A673 (cell line): ENCODE measurements at regions of chr7 and their contacts with region 1.

Region 1: DNA sequence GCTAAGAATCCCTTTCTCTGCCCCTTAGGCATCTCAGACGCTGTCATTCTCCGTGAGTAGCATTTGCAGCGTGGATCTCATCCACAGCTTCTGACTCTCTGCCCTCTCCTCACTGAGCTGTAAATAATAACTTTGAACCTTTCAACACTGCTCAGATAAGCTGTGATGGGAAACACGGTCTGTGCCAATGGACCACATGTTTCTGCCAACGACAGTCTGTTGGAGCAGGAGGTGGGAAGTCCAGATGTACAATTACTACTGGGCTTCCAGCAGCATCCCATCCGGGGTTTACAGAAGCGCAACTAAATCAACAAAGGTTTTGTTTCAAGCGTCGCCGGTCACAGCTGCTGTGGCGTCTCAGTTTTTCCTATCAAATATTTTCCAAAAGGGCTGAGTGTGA is 1110.6 kb downstream of the TYW1 start:
- DNase-seq: no peak
- H3K4me3 ChIP-seq: no peak overlapping the region
- H3K27ac ChIP-seq: no peak overlapping the region
- H3K4me1 ChIP-seq: no peaks in the 10 kb centered on the region
- H3K27me3 ChIP-seq: no peaks in the 10 kb centered on the region
- CTCF ChIP-seq: no peak

Region 2: DNA sequence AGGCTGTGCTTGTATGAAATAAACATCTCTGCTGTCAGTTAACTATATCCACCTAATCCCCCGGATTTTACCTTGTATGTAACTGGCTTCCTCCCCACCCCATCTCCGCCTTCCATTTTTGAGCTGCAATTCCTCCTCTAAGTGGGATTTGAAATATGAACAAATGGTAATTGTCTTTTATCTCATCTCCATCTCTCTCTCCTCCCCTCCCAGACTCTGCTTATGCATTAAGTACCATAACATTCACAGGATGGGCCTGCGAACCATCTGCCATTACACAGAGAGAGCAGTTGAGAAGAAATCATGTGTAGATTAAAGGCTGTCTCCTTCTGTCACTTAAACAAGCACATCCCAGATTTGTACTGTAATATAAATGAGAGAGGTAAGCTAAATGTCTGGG is 59.3 kb after region 1 on chr7:
- CTCF ChIA-PET with region 1: no interaction called
- POLR2A ChIA-PET with region 1: no interaction called
- intact Hi-C with region 1: loop called (anchors 10 kb)
- DNase-seq: no peak
- H3K4me3 ChIP-seq: no peak overlapping the region
- H3K27ac ChIP-seq: no peak overlapping the region
- H3K4me1 ChIP-seq: peaks cover 5% of the 10 kb centered on the region
- H3K27me3 ChIP-seq: no peaks in the 10 kb centered on the region
- CTCF ChIP-seq: no peak